ENCODE measurements at regions of chr6 and their contacts with region 1.

Region 1: GRCh38 chr6:2988426-2989331 is 11.0 kb upstream of the NQO2 start:
- DNase-seq: peak; percentile 79 to 97 (median 90)

Region 2: GRCh38 chr6:2848851-2849250 is 139.8 kb before region 1 on chr6:
- intact Hi-C with region 1: loop called (anchors 2 kb)
- DNase-seq: no peak

Region 3: DNA sequence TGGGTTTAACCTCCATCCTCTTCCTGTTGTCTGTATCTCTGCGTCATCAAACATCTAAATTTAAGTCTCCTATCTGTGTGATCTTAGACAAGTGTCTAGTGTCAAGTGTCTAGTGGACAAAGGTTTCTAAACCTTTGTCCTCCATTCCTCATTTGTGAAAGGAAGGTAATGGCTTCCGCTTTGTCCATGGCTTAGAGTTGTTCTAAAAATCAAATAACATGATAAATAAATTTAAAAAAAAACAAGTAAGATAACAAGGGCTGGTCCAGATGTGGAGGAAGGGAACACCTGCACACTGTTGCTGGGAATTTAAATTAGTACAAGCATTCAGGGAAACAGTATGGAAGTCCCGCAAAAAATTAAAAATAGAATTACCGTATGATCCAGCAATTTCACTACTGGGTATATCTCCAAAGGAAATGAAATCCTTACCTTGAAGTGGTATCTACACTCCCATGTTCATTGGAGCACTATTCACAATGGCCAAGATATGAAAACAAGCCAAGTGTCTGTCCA is 129.4 kb before region 1 on chr6:
- intact Hi-C with region 1: no loop called
- DNase-seq: no peak

Region 4: DNA sequence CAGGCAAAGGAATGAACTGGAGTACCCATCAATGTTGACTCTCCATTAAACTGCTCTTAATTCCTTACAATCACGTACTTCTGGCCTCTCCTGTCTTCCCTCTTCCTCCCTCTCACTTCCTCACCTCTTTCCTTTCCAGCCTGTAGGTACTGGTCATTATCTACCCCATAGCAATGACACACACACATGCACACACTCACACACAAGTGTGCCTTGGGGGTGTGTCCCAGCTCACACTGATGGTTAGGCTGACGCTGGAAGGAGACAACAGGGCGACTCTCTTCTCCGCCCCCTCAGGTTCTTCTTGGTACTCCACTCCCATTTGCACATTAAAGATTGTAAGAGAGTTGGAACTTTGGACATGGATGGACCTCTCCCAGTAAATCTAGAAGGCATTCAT is 71.6 kb before region 1 on chr6:
- intact Hi-C with region 1: no loop called
- DNase-seq: peak in 1 of 42 donors; percentile 25

Region 5: GRCh38 chr6:2952557-2953095 is 36.1 kb before region 1 on chr6:
- intact Hi-C with region 1: loop called (anchors 2 kb)
- DNase-seq: peak; percentile 41 to 90 (median 74)

Region 6: DNA sequence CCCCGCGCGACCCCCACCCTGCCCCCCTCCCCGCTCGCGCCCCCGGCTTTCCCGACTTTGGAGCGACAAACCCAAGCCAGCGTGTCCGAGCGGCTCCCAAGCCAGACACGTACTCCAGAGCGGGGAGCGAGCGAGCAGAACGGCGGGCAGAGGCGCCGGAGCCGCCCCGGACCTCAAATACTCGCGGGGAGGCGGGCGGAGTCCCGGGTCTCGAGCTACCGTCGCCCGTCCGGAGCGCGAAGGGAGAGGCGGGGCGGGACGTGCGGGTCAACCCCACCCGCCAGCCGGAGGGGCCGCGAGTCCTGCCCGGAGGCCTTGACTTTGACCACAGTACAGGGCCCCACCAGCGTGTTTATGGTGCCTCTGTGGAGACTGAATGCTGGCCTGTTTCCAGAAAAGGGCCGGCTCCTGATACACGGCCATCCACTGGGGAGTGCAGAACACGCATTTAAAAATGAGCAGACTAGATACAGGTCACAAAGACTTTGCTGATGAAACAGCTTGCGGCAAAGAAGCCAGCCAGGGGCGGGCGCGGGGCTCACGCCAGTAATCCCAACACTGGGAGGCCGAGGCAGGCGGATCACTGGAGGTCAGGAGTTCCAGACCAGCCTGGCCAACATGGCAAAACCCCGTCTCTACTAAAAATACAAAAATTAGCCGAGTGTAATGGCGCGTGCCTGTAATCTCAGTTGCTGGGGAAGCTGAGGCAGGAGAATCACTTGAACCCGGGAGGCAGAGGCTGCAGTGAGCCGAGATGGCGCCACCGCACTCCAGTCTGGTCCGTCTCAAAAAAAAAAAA is 17.1 kb before region 1 on chr6 and contains the start of gene SERPINB6:
- intact Hi-C with region 1: loop called (anchors 2 kb)
- DNase-seq: peak; percentile 65 to 92 (median 80)

Region 7: DNA sequence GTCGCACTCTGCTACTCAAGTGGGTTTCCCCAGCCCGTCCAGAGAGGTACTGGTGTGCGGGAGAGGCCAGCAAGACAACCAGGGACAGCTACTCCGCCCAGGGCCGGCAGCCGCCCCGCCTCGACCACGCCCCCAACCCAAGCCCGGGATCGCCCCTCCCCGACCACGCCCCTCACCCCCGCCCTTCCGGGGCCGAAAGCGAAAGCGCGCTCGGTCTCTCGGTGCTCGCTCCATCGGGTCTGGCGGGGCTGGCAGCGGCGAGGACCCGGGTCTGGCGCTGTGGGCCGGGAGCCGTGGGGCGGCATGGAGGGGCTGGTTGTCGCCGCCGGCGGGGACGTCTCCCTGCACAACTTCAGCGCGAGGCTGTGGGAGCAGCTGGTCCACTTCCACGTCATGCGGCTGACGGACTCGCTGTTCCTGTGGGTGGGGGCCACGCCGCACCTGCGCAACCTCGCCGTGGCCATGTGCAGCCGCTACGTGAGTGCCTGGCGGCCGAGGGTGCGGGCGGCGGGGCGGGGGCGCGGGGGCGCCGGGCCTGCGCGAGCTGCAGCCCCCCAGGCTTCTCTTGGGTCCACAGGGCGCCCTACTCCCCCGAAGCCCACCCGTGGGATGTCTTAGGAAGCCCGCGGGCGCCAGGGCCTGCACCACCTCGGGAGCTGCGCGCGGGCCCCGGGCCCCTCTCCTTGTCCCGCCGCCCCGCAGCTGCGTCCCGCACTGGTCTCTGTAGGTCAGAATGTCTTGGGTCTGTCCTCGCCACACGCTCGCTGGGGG is 270.2 kb after region 1 on chr6 and contains the start of gene PSMG4:
- intact Hi-C with region 1: loop called (anchors 10 kb)
- DNase-seq: peak; percentile 79 to 97 (median 96)

Measured in head of caudate nucleus (tissue), 42 donors.